Kidney (tissue), 22 donors: ENCODE measurements at regions of chr20 and their contacts with region 1.

Region 1: DNA sequence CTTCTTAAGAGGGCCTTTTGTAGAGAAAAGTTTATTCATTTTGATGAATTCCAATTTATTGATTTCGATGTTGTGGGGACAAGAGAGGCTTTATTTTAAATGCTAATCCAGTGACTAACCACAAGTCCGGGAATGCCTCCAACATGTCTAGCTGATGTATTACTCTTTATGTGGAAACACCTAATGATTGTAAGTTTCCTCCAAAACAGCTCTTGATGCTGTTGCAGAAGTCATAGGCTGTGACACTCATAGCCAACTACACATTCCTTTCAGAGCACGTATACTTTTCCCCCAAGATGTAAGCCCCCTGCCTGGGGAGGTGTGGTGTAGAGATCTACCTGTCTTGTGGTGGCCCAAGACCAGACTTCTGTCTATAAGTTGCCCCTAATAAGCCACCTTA is 61.3 kb upstream of the RNF24 start:
- DNase-seq: peak in 2 of 5 donors; percentile 33 to 80
- H3K4me3 ChIP-seq: no peak overlapping the region
- H3K27ac ChIP-seq: no peak overlapping the region
- H3K4me1 ChIP-seq: no peaks in the 10 kb centered on the region
- H3K27me3 ChIP-seq: no peaks in the 10 kb centered on the region
- CTCF ChIP-seq: no peak

Region 2: GRCh38 chr20:4014031-4014474 is 62.6 kb before region 1 on chr20:
- intact Hi-C with region 1: loop called (anchors 10 kb)
- DNase-seq: peak in 4 of 5 donors; percentile 63 to 90 (median 78)
- H3K4me3 ChIP-seq: peak overlapping the region; percentile 61 to 76 (median 73)
- H3K27ac ChIP-seq: peak overlapping the region; percentile 74 to 83
- H3K4me1 ChIP-seq: peaks cover 2 to 17% (median 9%) of the 10 kb centered on the region in 3 donors
- H3K27me3 ChIP-seq: no peaks in the 10 kb centered on the region
- CTCF ChIP-seq: peak; percentile 72